Motor neuron (in vitro differentiated cells): ENCODE measurements at regions of chr18 and their contacts with region 1.

Region 1: DNA sequence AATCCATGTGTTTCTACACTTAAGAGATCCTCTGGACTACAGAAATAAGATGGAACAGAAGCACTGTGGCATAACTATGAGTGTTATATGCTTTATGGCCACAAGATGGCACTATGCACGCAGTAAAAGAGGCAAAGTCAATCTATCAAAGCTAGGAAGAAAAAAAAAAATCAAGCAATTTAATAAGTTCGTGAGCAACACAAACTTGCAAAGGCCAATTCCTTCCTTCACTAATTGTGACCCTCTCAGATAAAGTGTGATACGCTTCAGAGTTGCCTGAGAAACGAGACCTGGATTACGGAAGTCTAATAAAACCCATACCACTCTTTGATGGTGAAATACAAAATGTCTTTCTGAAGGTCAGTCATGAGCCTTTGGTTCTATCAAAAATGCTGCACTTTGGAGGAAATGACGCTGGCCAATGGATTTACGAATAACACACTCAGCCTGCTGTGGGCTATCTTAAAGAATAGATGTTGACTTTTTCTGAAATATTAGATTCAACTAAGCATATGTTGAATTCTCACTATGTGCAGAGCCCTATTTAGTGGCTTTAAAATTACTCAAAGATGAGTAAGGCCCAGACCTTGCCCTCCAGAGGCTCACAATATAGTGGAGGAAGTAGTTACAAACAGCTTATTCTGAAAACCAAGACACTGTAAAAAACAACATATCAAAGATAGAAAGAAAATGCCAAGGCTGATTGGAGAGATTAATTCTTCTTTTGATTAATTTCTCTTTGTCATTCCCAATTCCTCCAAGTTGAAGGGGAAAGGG is 35.5 kb upstream of the TTR start:
- ATAC-seq: peak; percentile 50 to 80 (median 66)
- H3K4me3 ChIP-seq: no peak overlapping the region
- H3K27ac ChIP-seq: no peak overlapping the region
- H3K4me1 ChIP-seq: no peaks in the 10 kb centered on the region

Region 2: GRCh38 chr18:31722369-31722957 is 166.3 kb after region 1 on chr18:
- in situ Hi-C with region 1: loop called in 3 of 9 experiments (anchors 10 to 25 kb)
- ATAC-seq: peak; percentile 86 to 100 (median 92)
- H3K4me3 ChIP-seq: no peak overlapping the region
- H3K27ac ChIP-seq: no peak overlapping the region
- H3K4me1 ChIP-seq: no peaks in the 10 kb centered on the region

Region 3: GRCh38 chr18:31819106-31819924 is 263.2 kb after region 1 on chr18:
- in situ Hi-C with region 1: loop called in 4 of 9 experiments (anchors 25 kb)
- ATAC-seq: peak in 6 of 8 experiments; percentile 45 to 98 (median 78)
- H3K4me3 ChIP-seq: no peak overlapping the region
- H3K27ac ChIP-seq: no peak overlapping the region
- H3K4me1 ChIP-seq: no peaks in the 10 kb centered on the region

Region 4: DNA sequence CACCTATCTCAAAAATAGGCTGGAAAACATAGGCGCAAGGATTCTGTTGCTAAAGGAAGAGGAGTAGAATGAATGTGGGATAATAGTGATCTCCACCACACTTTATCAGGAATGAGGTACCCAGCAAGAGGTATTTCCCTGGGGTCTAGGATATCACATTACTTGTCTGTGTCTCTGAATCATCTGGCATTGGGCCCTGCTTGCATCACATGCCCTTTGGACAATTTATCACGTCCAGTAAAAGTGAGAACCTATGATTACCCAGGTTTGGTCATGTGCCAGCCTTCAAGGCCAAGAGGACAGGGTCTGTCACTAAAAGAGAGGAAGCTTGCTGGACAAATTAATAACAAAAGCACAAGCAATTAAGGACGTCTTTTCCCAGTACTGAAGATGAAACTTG is 398.2 kb after region 1 on chr18:
- in situ Hi-C with region 1: loop called in 2 of 9 experiments (anchors 25 kb)
- ATAC-seq: peak in 5 of 8 experiments; percentile 32 to 63 (median 50)
- H3K4me3 ChIP-seq: no peak overlapping the region
- H3K27ac ChIP-seq: no peak overlapping the region
- H3K4me1 ChIP-seq: no peaks in the 10 kb centered on the region

Region 5: DNA sequence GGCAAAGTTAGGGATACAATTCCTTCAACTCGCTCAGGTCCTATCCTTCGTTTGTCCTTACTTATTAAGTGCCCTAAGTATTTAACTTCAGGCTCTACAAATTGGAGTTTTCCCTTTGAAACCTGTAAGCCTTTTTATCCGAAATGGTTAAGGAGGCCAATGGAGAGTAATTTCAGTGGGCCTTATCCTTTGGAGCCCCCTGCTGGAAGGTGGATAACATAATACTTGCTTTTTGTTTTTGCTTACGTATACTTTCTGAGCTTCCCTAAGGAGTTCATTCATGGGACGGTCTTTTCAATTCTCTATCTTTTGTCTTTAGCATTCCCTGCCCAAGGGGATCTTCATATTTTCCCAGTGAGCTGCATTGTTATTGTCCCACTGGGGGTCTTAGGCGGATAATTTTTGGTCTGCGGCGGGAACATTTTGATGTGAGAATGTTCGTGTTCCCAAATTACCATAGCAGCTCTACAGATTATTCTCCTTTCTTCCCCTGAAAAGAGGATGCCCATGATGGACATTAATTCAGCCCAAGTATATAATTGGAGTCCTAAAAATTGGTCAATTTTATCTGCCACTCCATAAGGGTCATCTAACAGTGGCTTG is 421.2 kb after region 1 on chr18:
- in situ Hi-C with region 1: loop called in 3 of 9 experiments (anchors 25 kb)
- ATAC-seq: peak in 3 of 8 experiments; percentile 63 to 78 (median 65)
- H3K4me3 ChIP-seq: no peak overlapping the region
- H3K27ac ChIP-seq: no peak overlapping the region
- H3K4me1 ChIP-seq: no peaks in the 10 kb centered on the region

Region 6: GRCh38 chr18:32110005-32110404 is 553.8 kb after region 1 on chr18:
- in situ Hi-C with region 1: no loop called
- ATAC-seq: no peak
- H3K4me3 ChIP-seq: no peak overlapping the region
- H3K27ac ChIP-seq: no peak overlapping the region
- H3K4me1 ChIP-seq: no peaks in the 10 kb centered on the region